ENCODE measurements at regions of chrX and their contacts with region 1.

Region 1: GRCh38 chrX:72181178-72182125 is at the start of gene PIN4:
- DNase-seq: peak; percentile 88
- ATAC-seq: peak; percentile 96
- H3K4me3 Mint-ChIP-seq: no peak within 1 kb of the TSS
- H3K27ac Mint-ChIP-seq: no peak within 1 kb of the TSS
- H3K4me1 Mint-ChIP-seq: peaks cover 16% of the 10 kb centered on the region
- H3K27me3 Mint-ChIP-seq: no peaks in the 10 kb centered on the region
- total RNA-seq, gene PIN4: 2.3 to 3.2 TPM

Region 2: GRCh38 chrX:72018277-72019112 is 163.0 kb before region 1 on chrX:
- CTCF ChIA-PET with region 1: interaction called, 10 read pairs
- POLR2A ChIA-PET with region 1: no interaction called
- intact Hi-C with region 1: loop called in 1 of 2 experiments (anchors 1 kb)
- DNase-seq: peak; percentile 89
- ATAC-seq: peak; percentile 93
- H3K4me3 Mint-ChIP-seq: no peak overlapping the region
- H3K27ac Mint-ChIP-seq: no peak overlapping the region
- H3K4me1 Mint-ChIP-seq: peaks cover 29% of the 10 kb centered on the region
- H3K27me3 Mint-ChIP-seq: peaks cover 7% of the 10 kb centered on the region

Region 3: DNA sequence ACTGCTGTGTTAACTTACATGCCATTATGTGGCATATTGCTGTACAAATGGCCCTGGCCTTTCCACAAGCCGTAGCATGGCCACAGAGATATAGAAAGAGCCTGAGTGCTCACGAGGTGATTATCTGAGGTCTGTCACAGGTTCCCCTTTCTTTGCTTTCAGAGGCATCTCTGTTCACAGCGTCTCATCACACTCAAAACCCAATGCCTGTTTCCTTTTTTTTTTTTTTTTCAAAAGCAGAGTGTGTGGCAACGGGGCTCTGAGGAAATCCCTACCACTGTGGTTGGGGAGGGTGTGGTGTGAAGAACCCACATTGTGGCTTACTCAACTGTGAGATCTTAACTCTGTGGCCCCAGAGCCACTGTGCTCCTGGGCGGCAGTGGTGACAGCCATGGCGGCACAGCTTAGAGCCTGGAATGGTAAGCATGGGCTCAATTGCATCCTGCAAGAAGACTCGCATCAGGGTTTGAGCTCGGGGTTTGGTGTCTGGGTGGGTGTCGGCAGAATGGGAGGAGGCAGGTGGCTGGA is 80.6 kb before region 1 on chrX:
- CTCF ChIA-PET with region 1: no interaction called
- POLR2A ChIA-PET with region 1: no interaction called
- intact Hi-C with region 1: no loop called
- DNase-seq: peak; percentile 81
- ATAC-seq: peak; percentile 77
- H3K4me3 Mint-ChIP-seq: peak overlapping the region; percentile 45
- H3K27ac Mint-ChIP-seq: no peak overlapping the region
- H3K4me1 Mint-ChIP-seq: peaks cover 28% of the 10 kb centered on the region
- H3K27me3 Mint-ChIP-seq: peaks cover 18% of the 10 kb centered on the region

Region 4: GRCh38 chrX:72115380-72115779 is 66.1 kb before region 1 on chrX:
- CTCF ChIA-PET with region 1: no interaction called
- POLR2A ChIA-PET with region 1: no interaction called
- intact Hi-C with region 1: no loop called
- DNase-seq: no peak
- ATAC-seq: no peak
- H3K4me3 Mint-ChIP-seq: no peak overlapping the region
- H3K27ac Mint-ChIP-seq: no peak overlapping the region
- H3K4me1 Mint-ChIP-seq: no peaks in the 10 kb centered on the region
- H3K27me3 Mint-ChIP-seq: peaks cover 3% of the 10 kb centered on the region

Region 5: DNA sequence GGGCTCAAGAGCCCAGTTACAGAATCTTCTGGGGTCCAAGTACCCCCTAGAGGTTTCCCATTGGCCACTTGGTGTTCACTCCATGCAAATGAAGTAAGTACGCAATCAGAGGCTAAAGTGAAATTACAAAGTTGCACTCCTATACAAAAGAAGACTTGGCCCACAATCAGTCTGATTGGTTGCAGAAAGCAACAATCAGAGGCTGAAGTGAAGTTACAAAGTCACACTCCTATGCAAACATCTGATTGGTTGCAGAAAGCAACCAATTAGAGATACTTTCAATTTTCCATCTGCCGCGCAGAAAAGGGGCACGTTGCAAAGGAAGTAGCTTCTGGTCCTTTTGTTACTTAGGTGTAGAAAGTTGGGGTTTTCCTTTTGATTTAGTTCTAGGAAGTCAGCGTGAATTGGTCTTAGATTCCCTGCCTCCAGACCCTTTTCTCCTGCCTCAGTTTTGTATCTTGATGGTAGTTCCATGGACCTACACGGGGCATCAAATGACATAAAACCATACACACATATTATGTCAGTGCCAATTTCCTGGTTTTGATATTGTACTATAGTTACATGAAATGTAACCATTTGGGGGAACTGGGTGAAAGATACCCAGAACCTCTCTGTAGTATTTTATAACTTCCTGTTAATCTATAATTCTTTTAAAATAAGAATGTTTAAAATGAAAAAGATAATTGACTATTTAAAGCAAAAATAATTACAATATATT is 12.3 kb before region 1 on chrX:
- CTCF ChIA-PET with region 1: no interaction called
- POLR2A ChIA-PET with region 1: no interaction called
- intact Hi-C with region 1: loop called in 1 of 2 experiments (anchors 1 kb)
- DNase-seq: peak; percentile 43
- ATAC-seq: peak; percentile 94
- H3K4me3 Mint-ChIP-seq: peak overlapping the region; percentile 50
- H3K27ac Mint-ChIP-seq: peak overlapping the region; percentile 76
- H3K4me1 Mint-ChIP-seq: peaks cover 10% of the 10 kb centered on the region
- H3K27me3 Mint-ChIP-seq: no peaks in the 10 kb centered on the region

Region 6: GRCh38 chrX:72238721-72239475 is 57.4 kb after region 1 on chrX and contains the start of gene ERCC6L:
- CTCF ChIA-PET with region 1: interaction called, 4 read pairs
- POLR2A ChIA-PET with region 1: no interaction called
- intact Hi-C with region 1: loop called (anchors 1 to 5 kb)
- DNase-seq: peak; percentile 91
- ATAC-seq: peak; percentile 97
- H3K4me3 Mint-ChIP-seq: peak within 1 kb of the TSS; percentile 80
- H3K27ac Mint-ChIP-seq: peak within 1 kb of the TSS; percentile 83
- H3K4me1 Mint-ChIP-seq: peaks cover 15% of the 10 kb centered on the region
- H3K27me3 Mint-ChIP-seq: no peaks in the 10 kb centered on the region
- total RNA-seq, gene ERCC6L: 11.3 to 11.7 TPM

Region 7: GRCh38 chrX:72245461-72246089 is 64.1 kb after region 1 on chrX:
- CTCF ChIA-PET with region 1: no interaction called
- POLR2A ChIA-PET with region 1: no interaction called
- intact Hi-C with region 1: loop called in 1 of 2 experiments (anchors 1 kb)
- DNase-seq: peak; percentile 61
- ATAC-seq: peak; percentile 63
- H3K4me3 Mint-ChIP-seq: no peak overlapping the region
- H3K27ac Mint-ChIP-seq: no peak overlapping the region
- H3K4me1 Mint-ChIP-seq: peaks cover 9% of the 10 kb centered on the region
- H3K27me3 Mint-ChIP-seq: no peaks in the 10 kb centered on the region

Region 8: DNA sequence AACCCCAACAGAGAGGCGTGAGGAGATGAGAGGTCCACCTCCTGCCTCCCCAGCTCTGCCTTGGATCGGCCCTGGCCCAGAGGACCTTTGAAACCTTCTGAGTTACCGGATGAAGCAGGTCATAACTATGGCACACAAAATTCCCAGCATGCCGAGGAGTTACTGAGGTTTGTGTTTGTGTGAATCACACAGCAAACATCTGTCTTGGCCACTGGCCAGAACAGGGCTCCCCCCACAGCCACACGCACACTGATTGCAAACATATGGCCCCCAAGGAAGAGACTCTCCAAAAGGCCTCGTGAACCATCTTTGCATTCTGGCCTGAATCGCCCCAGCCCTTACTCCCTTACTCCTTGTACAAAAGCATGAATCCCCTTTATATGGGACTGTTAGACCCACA is 76.7 kb after region 1 on chrX:
- CTCF ChIA-PET with region 1: no interaction called
- POLR2A ChIA-PET with region 1: interaction called, 13 read pairs
- intact Hi-C with region 1: no loop called
- DNase-seq: no peak
- ATAC-seq: no peak
- H3K4me3 Mint-ChIP-seq: no peak overlapping the region
- H3K27ac Mint-ChIP-seq: no peak overlapping the region
- H3K4me1 Mint-ChIP-seq: peaks cover 8% of the 10 kb centered on the region
- H3K27me3 Mint-ChIP-seq: peaks cover 25% of the 10 kb centered on the region

Region 9: GRCh38 chrX:72366613-72367454 is 185.4 kb after region 1 on chrX:
- CTCF ChIA-PET with region 1: no interaction called
- POLR2A ChIA-PET with region 1: no interaction called
- intact Hi-C with region 1: no loop called
- DNase-seq: no peak
- ATAC-seq: no peak
- H3K4me3 Mint-ChIP-seq: no peak overlapping the region
- H3K27ac Mint-ChIP-seq: no peak overlapping the region
- H3K4me1 Mint-ChIP-seq: no peaks in the 10 kb centered on the region
- H3K27me3 Mint-ChIP-seq: no peaks in the 10 kb centered on the region

Region 10: DNA sequence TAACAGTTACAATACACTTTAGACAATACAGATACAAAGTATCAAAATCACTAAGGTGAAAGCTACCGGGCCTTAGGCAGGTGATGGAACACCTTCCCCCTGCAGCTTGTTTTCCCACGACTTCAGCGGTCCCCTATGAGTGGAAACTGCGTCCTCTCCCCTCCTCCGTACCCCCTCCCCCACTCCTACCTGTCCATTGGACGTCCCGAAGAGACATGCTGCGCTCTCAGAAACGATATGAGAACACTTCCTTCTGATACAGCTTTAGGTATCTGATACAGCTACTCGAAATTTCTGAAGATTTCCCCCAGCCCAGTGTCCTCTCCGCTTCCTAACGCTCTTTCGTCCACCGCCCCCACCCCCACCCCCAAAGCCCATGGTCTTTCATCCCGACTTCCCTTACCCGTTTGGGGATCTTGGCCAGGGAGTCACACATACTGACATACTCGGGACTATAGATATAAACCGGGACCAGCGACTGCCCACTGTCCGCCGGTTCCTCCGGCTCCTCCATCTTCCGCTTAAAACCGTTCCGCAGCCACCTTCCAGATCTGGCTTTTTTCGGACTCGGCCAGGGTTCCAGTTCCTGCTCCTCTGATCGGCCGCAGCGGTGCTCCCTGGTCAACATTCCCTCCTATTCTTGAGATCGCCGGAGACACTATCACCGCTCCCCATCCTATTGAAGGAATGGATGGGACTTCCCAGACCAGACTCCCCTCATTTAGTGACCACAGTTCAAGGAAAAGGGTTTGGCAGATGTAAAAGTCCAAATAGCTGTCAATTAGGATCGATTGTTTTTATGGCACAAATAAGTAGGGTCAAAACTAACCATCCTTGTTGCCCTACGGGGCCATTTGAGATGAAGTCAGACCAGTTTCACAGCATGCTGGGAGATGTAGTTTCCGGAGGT is 391.1 kb after region 1 on chrX and contains the start of gene HDAC8:
- CTCF ChIA-PET with region 1: no interaction called
- POLR2A ChIA-PET with region 1: no interaction called
- intact Hi-C with region 1: loop called in 1 of 2 experiments (anchors 5 kb)
- DNase-seq: peak; percentile 59
- ATAC-seq: peak; percentile 90
- H3K4me3 Mint-ChIP-seq: peak within 1 kb of the TSS; percentile 97
- H3K27ac Mint-ChIP-seq: peak within 1 kb of the TSS; percentile 95
- H3K4me1 Mint-ChIP-seq: peaks cover 9% of the 10 kb centered on the region
- H3K27me3 Mint-ChIP-seq: no peaks in the 10 kb centered on the region
- total RNA-seq, gene HDAC8: 13.3 to 16.9 TPM

Measured in activated CD4-positive, alpha-beta T cell treated with anti-CD3 and anti-CD28 coated beads for 36 hours (primary cell).